ENCODE measurements at regions of chr6 and their contacts with region 1.

Region 1: GRCh38 chr6:42901536-42901957 is 14.3 kb upstream of the PTCRA start:
- DNase-seq: peak; percentile 70 to 92 (median 85)
- ATAC-seq: peak; percentile 97 to 99 (median 99)
- H3K4me3 ChIP-seq: peak overlapping the region in 2 of 4 donors; percentile 9 to 27
- H3K27ac ChIP-seq: peak overlapping the region in 2 of 4 donors; percentile 78 to 87
- H3K4me1 ChIP-seq: peaks cover 4 to 16% (median 9%) of the 10 kb centered on the region in 3 donors
- H3K27me3 ChIP-seq: no peaks in the 10 kb centered on the region
- CTCF ChIP-seq: peak; percentile 67 to 87 (median 80)

Region 2: GRCh38 chr6:43035495-43036194 is 134.1 kb after region 1 on chr6:
- intact Hi-C with region 1: no loop called
- DNase-seq: no peak
- ATAC-seq: peak in 1 of 4 donors; percentile 19
- H3K4me3 ChIP-seq: no peak overlapping the region
- H3K27ac ChIP-seq: no peak overlapping the region
- H3K4me1 ChIP-seq: no peaks in the 10 kb centered on the region
- H3K27me3 ChIP-seq: no peaks in the 10 kb centered on the region
- CTCF ChIP-seq: no peak

Region 3: GRCh38 chr6:43138267-43138666 is 236.7 kb after region 1 on chr6:
- intact Hi-C with region 1: loop called (anchors 5 to 10 kb)
- DNase-seq: no peak
- ATAC-seq: no peak
- H3K4me3 ChIP-seq: no peak overlapping the region
- H3K27ac ChIP-seq: no peak overlapping the region
- H3K4me1 ChIP-seq: peaks cover 0 to 2% (median 0%) of the 10 kb centered on the region in 3 donors
- H3K27me3 ChIP-seq: no peaks in the 10 kb centered on the region
- CTCF ChIP-seq: no peak

Region 4: GRCh38 chr6:43143235-43144124 is 241.9 kb after region 1 on chr6:
- intact Hi-C with region 1: loop called (anchors 5 to 10 kb)
- DNase-seq: peak; percentile 77 to 94 (median 90)
- ATAC-seq: peak; percentile 99 to 100 (median 99)
- H3K4me3 ChIP-seq: no peak overlapping the region
- H3K27ac ChIP-seq: no peak overlapping the region
- H3K4me1 ChIP-seq: peaks cover 0 to 6% (median 0%) of the 10 kb centered on the region in 3 donors
- H3K27me3 ChIP-seq: no peaks in the 10 kb centered on the region
- CTCF ChIP-seq: peak; percentile 85 to 94 (median 93)

Region 5: GRCh38 chr6:43247113-43247999 is 345.8 kb after region 1 on chr6:
- intact Hi-C with region 1: no loop called
- DNase-seq: peak; percentile 77 to 94 (median 86)
- ATAC-seq: peak; percentile 96 to 99 (median 98)
- H3K4me3 ChIP-seq: peak overlapping the region; percentile 20 to 69 (median 48)
- H3K27ac ChIP-seq: peak overlapping the region in 1 of 4 donors; percentile 14
- H3K4me1 ChIP-seq: no peaks in the 10 kb centered on the region
- H3K27me3 ChIP-seq: peaks cover 0 to 1% (median 0%) of the 10 kb centered on the region in 4 donors
- CTCF ChIP-seq: no peak